AG04450 (cell line): ENCODE measurements at regions of chr13 and their contacts with region 1.

Region 1: DNA sequence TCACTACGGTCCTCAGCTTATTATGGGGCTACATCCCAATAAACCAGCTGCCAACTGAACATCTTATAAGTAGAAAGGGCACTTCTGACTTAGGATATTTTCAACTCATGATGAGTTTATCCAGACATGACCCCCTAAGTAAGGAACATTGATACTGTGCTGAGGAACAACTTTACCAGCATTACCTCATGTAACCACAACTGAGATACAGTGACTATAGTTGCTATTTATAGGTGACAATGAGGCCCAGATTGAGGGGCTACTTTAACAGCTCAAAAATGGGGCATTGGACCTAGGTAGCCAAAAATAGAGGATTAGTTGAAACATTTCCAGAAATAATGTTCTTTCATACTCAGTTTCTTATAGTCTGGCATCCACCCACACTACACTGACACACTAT is 26.8 kb downstream of the SKA3 start:
- DNase-seq: no peak
- H3K4me3 ChIP-seq: no peak overlapping the region
- H3K27ac ChIP-seq: no peak overlapping the region
- H3K27me3 ChIP-seq: no peaks in the 10 kb centered on the region
- CTCF ChIP-seq: no peak

Region 2: GRCh38 chr13:20902438-20903163 is 247.0 kb before region 1 on chr13 and contains the start of gene XPO4:
- CTCF ChIA-PET with region 1: interaction called, 10 read pairs
- POLR2A ChIA-PET with region 1: no interaction called
- DNase-seq: peak; percentile 30
- H3K4me3 ChIP-seq: peak within 1 kb of the TSS; percentile 94
- H3K27ac ChIP-seq: peak within 1 kb of the TSS; percentile 90
- H3K27me3 ChIP-seq: no peaks in the 10 kb centered on the region
- CTCF ChIP-seq: no peak
- polyA plus RNA-seq, gene XPO4: 10.9 and 14.4 TPM in 2 replicates